Heart left ventricle (tissue), 16 donors: ENCODE measurements at regions of chr3 and their contacts with region 1.

Region 1: GRCh38 chr3:101069901-101070798 is 76.9 kb upstream of the ABI3BP start:
- DNase-seq: peak; percentile 13 to 80 (median 53)
- ATAC-seq: peak; percentile 55 to 82 (median 78)
- H3K4me3 ChIP-seq: no peak overlapping the region
- H3K27ac ChIP-seq: no peak overlapping the region
- H3K4me1 ChIP-seq: peaks cover 0 to 16% (median 0%) of the 10 kb centered on the region in 12 donors
- H3K27me3 ChIP-seq: no peaks in the 10 kb centered on the region
- CTCF ChIP-seq: peak; percentile 51 to 72 (median 64)
- POLR2A ChIP-seq: no peak

Region 2: DNA sequence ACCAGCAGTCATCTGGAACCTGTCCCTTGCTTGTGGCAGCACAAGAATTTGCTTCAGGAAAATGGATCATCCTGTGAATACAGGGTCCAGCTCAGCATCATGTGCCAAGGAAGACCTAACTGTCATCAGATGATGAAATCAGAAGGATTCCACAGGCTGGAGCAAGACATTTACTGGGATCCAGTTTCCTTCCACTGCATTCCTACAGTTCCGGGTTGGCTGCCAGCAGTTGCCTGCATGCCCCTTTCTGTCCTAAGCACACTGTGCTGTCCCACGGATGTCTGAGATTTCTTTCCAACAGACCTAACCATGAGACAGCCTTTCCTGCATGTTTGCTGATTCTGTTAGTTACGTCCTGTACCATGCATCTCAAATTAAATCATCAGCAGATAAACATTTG is 109.5 kb after region 1 on chr3:
- intact Hi-C with region 1: loop called in 1 of 10 experiments (anchors 10 kb)
- DNase-seq: no peak
- ATAC-seq: peak in 1 of 4 donors; percentile 61
- H3K4me3 ChIP-seq: no peak overlapping the region
- H3K27ac ChIP-seq: no peak overlapping the region
- H3K4me1 ChIP-seq: peaks cover 0 to 7% (median 0%) of the 10 kb centered on the region in 12 donors
- H3K27me3 ChIP-seq: no peaks in the 10 kb centered on the region
- CTCF ChIP-seq: no peak
- POLR2A ChIP-seq: no peak